ENCODE measurements at regions of chr18 and their contacts with region 1.

Region 1: DNA sequence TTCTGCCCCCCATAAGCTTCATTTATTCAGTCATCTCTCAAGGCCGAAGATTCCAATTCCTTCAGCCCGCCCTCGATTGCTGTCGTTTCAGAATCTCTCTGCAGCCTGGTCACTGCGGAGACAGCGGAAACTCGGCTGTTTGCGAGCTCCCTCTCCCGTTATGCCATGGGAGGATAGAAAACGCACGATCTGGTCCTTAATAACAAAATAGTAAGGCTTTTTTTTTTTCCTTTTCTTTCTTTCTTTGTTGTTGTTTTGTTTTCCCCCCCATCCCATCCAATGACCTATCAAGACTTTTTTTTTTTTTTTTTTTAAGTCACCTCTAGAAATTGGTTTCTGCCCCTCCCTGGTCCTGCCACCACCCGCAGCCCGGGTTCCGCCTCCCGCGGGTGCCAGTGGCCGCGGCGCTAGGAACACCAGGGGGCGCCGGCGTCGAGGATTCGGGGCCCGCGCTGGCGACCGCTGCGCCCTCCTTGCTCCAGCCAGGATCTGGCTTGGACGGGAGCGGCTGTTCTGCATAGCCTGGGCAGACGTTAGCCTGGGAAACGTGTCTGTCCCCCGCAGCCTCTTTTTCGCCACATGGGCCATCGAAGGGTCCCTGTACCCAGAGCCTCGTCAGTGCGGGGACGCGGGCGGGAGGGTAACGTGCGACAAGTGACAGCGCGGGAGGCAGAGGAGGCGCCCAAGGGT is 10.1 kb downstream of the CPLX4 start:
- DNase-seq: peak; percentile 92

Region 2: DNA sequence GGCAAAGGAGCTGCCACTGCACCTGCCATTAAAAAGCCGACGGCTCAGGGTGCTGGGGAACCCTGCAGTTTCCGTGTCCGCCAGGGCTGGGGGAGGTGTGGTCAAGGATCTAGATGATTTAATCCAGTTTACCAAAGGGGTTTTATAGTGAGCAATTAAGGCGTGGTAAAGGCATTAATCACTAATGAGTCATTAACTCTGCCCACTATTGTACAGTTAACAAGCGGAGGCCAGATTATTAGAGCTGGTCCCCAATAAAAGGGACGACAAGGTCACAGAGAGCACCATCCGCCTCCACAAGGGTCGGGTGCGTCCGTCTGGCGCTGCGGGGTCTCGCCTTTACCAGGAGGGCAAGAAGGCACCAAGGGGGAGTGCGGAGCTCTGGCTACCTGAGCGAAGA is 44.7 kb before region 1 on chr18:
- intact Hi-C with region 1: no loop called
- DNase-seq: no peak

Region 3: DNA sequence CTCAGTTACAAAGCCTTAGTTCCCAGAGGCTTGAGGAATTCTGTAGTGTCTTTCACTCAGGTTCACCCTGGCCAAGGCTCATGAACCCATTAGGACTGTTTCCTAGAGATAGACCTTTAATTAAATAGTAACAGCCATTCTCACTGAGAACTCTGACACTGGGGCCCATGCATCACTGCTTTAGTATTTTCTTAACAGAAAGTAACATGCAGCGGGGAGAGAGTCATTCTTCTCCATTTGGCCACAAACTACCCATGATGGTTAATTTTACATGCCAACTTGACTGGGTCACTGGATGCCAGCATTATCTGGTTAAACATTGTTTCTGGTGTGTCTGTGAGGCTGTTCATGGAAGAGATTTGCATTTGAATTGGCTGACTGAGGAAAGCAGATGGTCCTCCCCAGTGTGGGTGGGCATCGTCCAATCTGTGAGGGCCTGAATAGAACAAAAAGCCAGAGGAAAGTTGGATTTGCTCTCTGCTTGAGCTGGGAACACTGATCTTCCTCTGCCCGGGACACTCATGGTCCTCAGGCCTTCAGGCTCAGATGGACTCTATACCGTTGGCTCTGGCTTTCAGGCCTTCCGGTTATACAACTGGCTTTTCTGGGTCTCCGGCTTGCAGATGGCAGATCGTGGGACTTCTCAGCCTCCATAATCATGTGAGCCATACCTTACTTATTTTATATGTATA is 15.7 kb after region 1 on chr18:
- intact Hi-C with region 1: no loop called
- DNase-seq: no peak

Region 4: DNA sequence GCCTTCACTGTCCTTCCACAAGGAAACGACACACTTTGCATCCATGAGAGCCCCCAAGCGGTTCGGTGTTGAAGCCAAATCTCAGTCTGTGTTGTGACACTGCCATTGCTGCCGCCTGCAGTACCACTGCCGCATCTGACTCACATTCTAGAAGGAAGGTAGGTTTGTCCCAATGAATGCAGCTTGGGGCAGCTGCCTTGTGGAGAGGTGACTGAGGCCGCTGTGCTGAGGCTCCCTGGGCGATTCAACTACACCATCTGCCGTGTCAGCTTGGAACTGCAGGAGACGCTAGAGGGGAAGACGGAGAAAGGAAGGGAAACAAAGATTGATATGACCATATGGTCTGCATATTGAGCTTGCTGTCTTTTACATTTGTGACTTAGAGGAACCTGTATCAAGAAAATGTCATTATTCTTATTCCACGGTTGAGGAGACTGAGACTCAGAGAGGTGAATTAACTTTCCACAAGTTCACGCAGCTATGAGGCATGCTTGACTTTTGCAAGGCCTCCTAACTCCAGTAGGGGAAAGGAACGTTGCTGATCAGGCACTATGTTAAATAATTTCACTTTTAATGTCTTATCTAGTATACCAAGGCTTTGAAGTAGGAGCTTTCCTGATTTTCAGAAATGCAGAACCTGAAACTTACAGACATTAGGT is 94.2 kb after region 1 on chr18:
- intact Hi-C with region 1: loop called (anchors 2 to 10 kb)
- DNase-seq: peak; percentile 87